Esophagus muscularis mucosa (tissue), 4 donors: ENCODE measurements at regions of chr4 and their contacts with region 1.

Region 1: GRCh38 chr4:119692001-119692400 is 63.4 kb upstream of the PDE5A start:
- DNase-seq: no peak
- H3K4me3 ChIP-seq: no peak overlapping the region
- H3K27ac ChIP-seq: no peak overlapping the region
- H3K4me1 ChIP-seq: peaks cover 0 to 25% (median 8%) of the 10 kb centered on the region in 4 donors
- H3K27me3 ChIP-seq: no peaks in the 10 kb centered on the region
- CTCF ChIP-seq: peak in 2 of 3 experiments; percentile 22 to 30
- EP300 ChIP-seq: no peak
- POLR2A ChIP-seq: no peak

Region 2: GRCh38 chr4:119615068-119615719 is 76.8 kb before region 1 on chr4:
- intact Hi-C with region 1: no loop called
- DNase-seq: no peak
- H3K4me3 ChIP-seq: no peak overlapping the region
- H3K27ac ChIP-seq: peak overlapping the region; percentile 90 to 97 (median 94)
- H3K4me1 ChIP-seq: peaks cover 0 to 87% (median 78%) of the 10 kb centered on the region in 4 donors
- H3K27me3 ChIP-seq: no peaks in the 10 kb centered on the region
- CTCF ChIP-seq: no peak
- EP300 ChIP-seq: no peak
- POLR2A ChIP-seq: no peak

Region 3: DNA sequence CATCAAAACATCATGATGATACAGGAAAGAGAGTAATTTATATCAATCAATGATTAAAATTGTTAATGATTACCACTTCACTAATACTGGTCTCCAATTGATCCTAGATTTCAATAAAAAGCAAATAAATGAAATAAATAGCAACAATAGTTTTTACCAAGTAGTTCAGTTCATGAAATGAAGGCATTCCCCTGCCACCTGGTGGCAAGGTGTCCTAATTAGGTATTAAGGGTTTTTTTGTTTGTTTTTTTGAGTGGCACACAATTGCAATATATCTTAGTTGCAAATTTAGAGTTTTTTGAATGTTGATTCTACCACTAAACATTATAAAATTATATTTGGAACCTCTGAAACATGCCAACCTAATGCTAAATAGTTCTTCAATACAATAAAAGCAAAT is 94.0 kb after region 1 on chr4:
- intact Hi-C with region 1: loop called (anchors 10 kb)
- DNase-seq: no peak
- H3K4me3 ChIP-seq: no peak overlapping the region
- H3K27ac ChIP-seq: no peak overlapping the region
- H3K4me1 ChIP-seq: peaks cover 0 to 7% (median 0%) of the 10 kb centered on the region in 4 donors
- H3K27me3 ChIP-seq: no peaks in the 10 kb centered on the region
- CTCF ChIP-seq: peak; percentile 20 to 45 (median 25)
- EP300 ChIP-seq: no peak
- POLR2A ChIP-seq: no peak